B cell (primary cell): ENCODE measurements at regions of chr13 and their contacts with region 1.

Region 1: GRCh38 chr13:40445557-40445990 is 220.9 kb downstream of the FOXO1 start:
- DNase-seq: peak; percentile 97
- ATAC-seq: peak; percentile 96
- H3K4me3 ChIP-seq: peak overlapping the region in 1 of 5 experiments; percentile 53
- H3K4me3 Mint-ChIP-seq: peak overlapping the region; percentile 50
- H3K27ac ChIP-seq: peak overlapping the region; percentile 93 to 97
- H3K27ac Mint-ChIP-seq: peak overlapping the region; percentile 96
- H3K4me1 ChIP-seq: peaks cover 57 to 62% of the 10 kb centered on the region in 2 donors
- H3K4me1 Mint-ChIP-seq: peaks cover 68% of the 10 kb centered on the region
- H3K27me3 ChIP-seq: no peaks in the 10 kb centered on the region
- H3K27me3 Mint-ChIP-seq: no peaks in the 10 kb centered on the region
- CTCF ChIP-seq: no peak

Region 2: DNA sequence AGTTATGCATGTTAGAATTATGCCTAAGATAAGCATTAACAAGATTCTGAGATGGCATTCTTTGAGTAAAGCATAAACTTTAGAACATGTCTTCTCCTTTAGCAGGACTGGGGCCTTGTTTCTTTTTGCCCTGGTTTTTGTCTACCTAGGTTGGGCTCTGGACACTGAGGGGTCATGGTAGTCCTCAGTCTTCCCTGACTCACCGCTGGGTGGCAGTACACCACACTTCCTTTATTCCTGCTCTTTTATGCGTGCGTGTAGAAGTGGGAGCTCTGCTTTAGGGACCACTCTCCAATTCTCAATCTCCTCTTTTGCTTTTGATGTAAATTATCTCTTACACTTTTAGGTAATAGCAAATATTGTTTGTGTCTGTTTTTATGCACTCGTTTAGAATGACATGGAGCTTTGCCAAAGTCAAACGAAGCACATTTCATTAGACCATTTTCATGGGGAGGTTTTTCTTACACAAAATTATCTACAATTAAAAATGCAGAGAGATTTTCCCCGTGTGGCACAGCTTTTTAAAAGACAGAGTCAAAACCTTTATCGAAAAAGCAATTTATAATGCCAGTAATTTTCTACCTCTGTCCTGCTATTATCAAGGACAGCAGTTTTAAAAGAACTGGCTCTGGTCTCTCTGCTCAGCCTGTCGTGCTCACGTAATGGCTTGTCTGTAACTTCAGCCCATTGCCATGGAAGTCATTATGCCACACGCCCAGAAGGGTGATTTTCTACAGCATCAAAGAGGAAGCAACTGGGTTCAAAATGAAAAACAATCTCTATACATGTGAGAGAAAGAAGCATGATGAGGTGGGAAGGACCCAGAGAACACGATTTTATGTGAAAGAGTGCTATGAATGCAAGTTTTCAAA is 376.2 kb before region 1 on chr13:
- CTCF ChIA-PET with region 1: interaction called, 11 read pairs
- POLR2A ChIA-PET with region 1: no interaction called
- intact Hi-C with region 1: no loop called
- DNase-seq: peak; percentile 79
- ATAC-seq: peak; percentile 95
- H3K4me3 ChIP-seq: no peak overlapping the region
- H3K4me3 Mint-ChIP-seq: no peak overlapping the region
- H3K27ac ChIP-seq: no peak overlapping the region
- H3K27ac Mint-ChIP-seq: no peak overlapping the region
- H3K4me1 ChIP-seq: peaks cover 10 to 13% of the 10 kb centered on the region in 2 donors
- H3K4me1 Mint-ChIP-seq: peaks cover 11% of the 10 kb centered on the region
- H3K27me3 ChIP-seq: no peaks in the 10 kb centered on the region
- H3K27me3 Mint-ChIP-seq: no peaks in the 10 kb centered on the region
- CTCF ChIP-seq: peak; percentile 82

Region 3: GRCh38 chr13:40126306-40127085 is 319.1 kb before region 1 on chr13:
- CTCF ChIA-PET with region 1: interaction called, 3 read pairs
- POLR2A ChIA-PET with region 1: no interaction called
- intact Hi-C with region 1: loop called (anchors 1 kb)
- DNase-seq: peak; percentile 50
- ATAC-seq: peak; percentile 32
- H3K4me3 ChIP-seq: peak overlapping the region in 3 of 5 experiments; percentile 16 to 53 (median 18)
- H3K4me3 Mint-ChIP-seq: peak overlapping the region; percentile 59
- H3K27ac ChIP-seq: peak overlapping the region; percentile 52 to 69
- H3K27ac Mint-ChIP-seq: peak overlapping the region; percentile 51
- H3K4me1 ChIP-seq: peaks cover 46 to 47% of the 10 kb centered on the region in 2 donors
- H3K4me1 Mint-ChIP-seq: peaks cover 51% of the 10 kb centered on the region
- H3K27me3 ChIP-seq: no peaks in the 10 kb centered on the region
- H3K27me3 Mint-ChIP-seq: no peaks in the 10 kb centered on the region
- CTCF ChIP-seq: no peak

Region 4: GRCh38 chr13:40388617-40389016 is 57.0 kb before region 1 on chr13:
- CTCF ChIA-PET with region 1: interaction called, 3 read pairs
- POLR2A ChIA-PET with region 1: interaction called, 3 read pairs
- intact Hi-C with region 1: loop called (anchors 1 kb)
- DNase-seq: peak; percentile 80
- ATAC-seq: peak; percentile 94
- H3K4me3 ChIP-seq: peak overlapping the region in 4 of 5 experiments; percentile 9 to 66 (median 48)
- H3K4me3 Mint-ChIP-seq: peak overlapping the region; percentile 90
- H3K27ac ChIP-seq: peak overlapping the region; percentile 75 to 95
- H3K27ac Mint-ChIP-seq: peak overlapping the region; percentile 98
- H3K4me1 ChIP-seq: peaks cover 25 to 31% of the 10 kb centered on the region in 2 donors
- H3K4me1 Mint-ChIP-seq: peaks cover 26% of the 10 kb centered on the region
- H3K27me3 ChIP-seq: no peaks in the 10 kb centered on the region
- H3K27me3 Mint-ChIP-seq: no peaks in the 10 kb centered on the region
- CTCF ChIP-seq: no peak

Region 5: DNA sequence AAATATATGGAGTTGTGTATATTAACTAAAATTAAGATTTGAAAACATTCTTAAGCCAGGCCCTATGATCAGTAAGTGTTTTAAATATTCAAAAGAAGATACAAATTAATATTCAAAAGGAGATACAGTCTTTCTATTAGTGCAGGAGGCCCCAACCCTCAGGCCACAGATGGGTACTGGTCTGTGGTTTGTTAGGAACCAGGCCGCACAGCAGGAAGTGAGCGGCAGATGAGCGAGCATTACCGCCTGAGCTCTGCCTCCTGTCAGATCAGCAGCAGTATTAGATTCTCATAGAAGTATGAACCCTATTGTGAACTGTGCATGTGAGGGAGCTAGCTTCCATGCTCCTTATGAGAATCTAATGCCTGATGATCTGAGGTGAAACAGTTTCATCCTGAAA is 12.0 kb before region 1 on chr13:
- CTCF ChIA-PET with region 1: interaction called, 28 read pairs
- POLR2A ChIA-PET with region 1: interaction called, 55 read pairs
- intact Hi-C with region 1: loop called (anchors 1 kb)
- DNase-seq: peak; percentile 71
- ATAC-seq: peak; percentile 64
- H3K4me3 ChIP-seq: no peak overlapping the region
- H3K4me3 Mint-ChIP-seq: peak overlapping the region; percentile 53
- H3K27ac ChIP-seq: peak overlapping the region; percentile 71 to 81
- H3K27ac Mint-ChIP-seq: peak overlapping the region; percentile 85
- H3K4me1 ChIP-seq: peaks cover 88 to 90% of the 10 kb centered on the region in 2 donors
- H3K4me1 Mint-ChIP-seq: peaks cover 86% of the 10 kb centered on the region
- H3K27me3 ChIP-seq: no peaks in the 10 kb centered on the region
- H3K27me3 Mint-ChIP-seq: no peaks in the 10 kb centered on the region
- CTCF ChIP-seq: no peak

Region 6: DNA sequence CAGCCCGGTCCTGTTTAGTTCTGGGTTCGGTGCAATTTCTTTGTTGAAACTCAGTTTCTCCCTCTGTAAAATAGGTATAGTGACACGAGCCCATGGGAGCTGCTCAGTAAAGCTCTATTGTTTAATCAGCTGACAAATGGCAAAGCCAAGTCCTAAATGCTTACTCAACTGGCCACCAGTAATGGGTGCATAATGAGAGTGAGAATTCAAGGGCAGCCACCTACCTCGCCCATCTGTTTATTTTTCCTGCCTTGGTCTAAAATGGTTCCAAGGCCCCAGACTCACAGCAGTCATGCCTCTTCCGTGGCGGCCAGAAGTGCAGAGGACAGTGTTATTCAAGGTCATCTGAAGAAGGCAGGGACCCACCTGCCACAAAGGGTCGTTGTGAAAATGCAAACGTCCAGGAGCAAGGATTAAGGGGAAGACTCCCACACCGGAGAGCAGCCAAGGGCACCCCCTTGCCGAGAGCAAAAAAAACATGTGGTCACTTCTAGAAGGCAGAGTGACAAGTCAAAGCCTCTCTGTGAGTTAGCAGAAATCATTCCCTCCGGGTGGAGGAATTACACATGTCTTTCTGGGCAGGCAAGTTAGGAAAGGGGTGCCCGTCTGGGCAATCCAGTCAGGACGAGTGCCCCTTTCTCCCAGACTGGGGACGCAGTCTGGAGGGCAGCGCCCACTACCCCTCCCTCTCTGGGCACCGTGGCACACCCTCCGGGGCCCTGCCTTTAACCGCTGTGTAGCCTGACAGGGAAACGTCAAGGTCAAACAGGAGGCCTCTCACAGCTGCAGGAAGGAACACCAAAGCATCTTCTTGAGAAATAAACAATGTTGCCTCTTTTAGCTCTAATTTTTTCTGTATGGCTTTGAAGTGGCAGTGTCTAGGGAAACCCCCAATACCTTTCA is 34.7 kb after region 1 on chr13:
- CTCF ChIA-PET with region 1: no interaction called
- POLR2A ChIA-PET with region 1: no interaction called
- intact Hi-C with region 1: loop called (anchors 5 kb)
- DNase-seq: peak; percentile 29
- ATAC-seq: peak; percentile 40
- H3K4me3 ChIP-seq: no peak overlapping the region
- H3K4me3 Mint-ChIP-seq: peak overlapping the region; percentile 23
- H3K27ac ChIP-seq: no peak overlapping the region
- H3K27ac Mint-ChIP-seq: no peak overlapping the region
- H3K4me1 ChIP-seq: peaks cover 39 to 40% of the 10 kb centered on the region in 2 donors
- H3K4me1 Mint-ChIP-seq: peaks cover 46% of the 10 kb centered on the region
- H3K27me3 ChIP-seq: no peaks in the 10 kb centered on the region
- H3K27me3 Mint-ChIP-seq: no peaks in the 10 kb centered on the region
- CTCF ChIP-seq: no peak